ENCODE measurements at regions of chr5 and their contacts with region 1.

Region 1: DNA sequence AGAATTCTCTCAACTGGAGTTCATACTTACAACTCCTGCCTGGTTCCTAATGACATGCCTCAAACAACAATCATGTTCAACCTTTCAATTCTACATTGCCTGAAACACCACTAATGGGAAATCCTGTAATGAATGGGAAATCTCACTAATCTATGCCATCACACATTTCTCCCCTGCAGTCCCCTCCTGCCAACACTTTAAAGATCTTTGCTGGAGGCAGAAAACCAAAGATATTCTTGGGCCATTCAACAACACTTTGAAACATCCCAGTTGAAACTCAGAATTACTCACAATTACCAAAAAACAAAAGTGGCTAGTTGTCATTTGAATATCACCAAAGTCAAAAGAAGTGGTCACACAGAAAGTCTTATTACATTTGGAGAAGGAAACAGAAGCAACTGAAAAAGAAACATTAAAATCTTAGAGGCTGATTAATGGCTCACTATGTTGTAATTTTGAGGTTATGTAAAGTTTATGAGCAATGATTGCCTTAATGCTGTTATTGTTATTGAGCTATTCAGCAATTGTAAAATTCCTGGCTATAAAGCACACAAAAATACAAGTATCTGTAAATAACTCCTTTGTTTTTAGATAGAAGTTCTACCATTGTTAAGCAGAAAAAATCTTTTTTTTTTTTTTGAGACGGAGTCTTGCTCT is 313.4 kb upstream of the SLC30A5 start:
- DNase-seq: no peak
- H3K4me3 Mint-ChIP-seq: no peak overlapping the region
- H3K27ac Mint-ChIP-seq: no peak overlapping the region
- H3K4me1 Mint-ChIP-seq: no peaks in the 10 kb centered on the region
- H3K27me3 Mint-ChIP-seq: peaks cover 29% of the 10 kb centered on the region
- CTCF ChIP-seq: no peak

Region 2: GRCh38 chr5:68817632-68818031 is 37.2 kb after region 1 on chr5:
- CTCF ChIA-PET with region 1: no interaction called
- POLR2A ChIA-PET with region 1: no interaction called
- intact Hi-C with region 1: loop called (anchors 1 kb)
- DNase-seq: no peak
- H3K4me3 Mint-ChIP-seq: no peak overlapping the region
- H3K27ac Mint-ChIP-seq: no peak overlapping the region
- H3K4me1 Mint-ChIP-seq: no peaks in the 10 kb centered on the region
- H3K27me3 Mint-ChIP-seq: peaks cover 77% of the 10 kb centered on the region
- CTCF ChIP-seq: no peak

Region 3: GRCh38 chr5:68962757-68963484 is 182.5 kb after region 1 on chr5:
- CTCF ChIA-PET with region 1: interaction called, 3 read pairs
- POLR2A ChIA-PET with region 1: no interaction called
- intact Hi-C with region 1: loop called (anchors 10 kb)
- DNase-seq: peak; percentile 73
- H3K4me3 Mint-ChIP-seq: no peak overlapping the region
- H3K27ac Mint-ChIP-seq: no peak overlapping the region
- H3K4me1 Mint-ChIP-seq: peaks cover 6% of the 10 kb centered on the region
- H3K27me3 Mint-ChIP-seq: no peaks in the 10 kb centered on the region
- CTCF ChIP-seq: peak; percentile 73

Measured in MCF 10A (cell line).